Left colon (tissue), 2 donors: ENCODE measurements at regions of chr4 and their contacts with region 1.

Region 1: DNA sequence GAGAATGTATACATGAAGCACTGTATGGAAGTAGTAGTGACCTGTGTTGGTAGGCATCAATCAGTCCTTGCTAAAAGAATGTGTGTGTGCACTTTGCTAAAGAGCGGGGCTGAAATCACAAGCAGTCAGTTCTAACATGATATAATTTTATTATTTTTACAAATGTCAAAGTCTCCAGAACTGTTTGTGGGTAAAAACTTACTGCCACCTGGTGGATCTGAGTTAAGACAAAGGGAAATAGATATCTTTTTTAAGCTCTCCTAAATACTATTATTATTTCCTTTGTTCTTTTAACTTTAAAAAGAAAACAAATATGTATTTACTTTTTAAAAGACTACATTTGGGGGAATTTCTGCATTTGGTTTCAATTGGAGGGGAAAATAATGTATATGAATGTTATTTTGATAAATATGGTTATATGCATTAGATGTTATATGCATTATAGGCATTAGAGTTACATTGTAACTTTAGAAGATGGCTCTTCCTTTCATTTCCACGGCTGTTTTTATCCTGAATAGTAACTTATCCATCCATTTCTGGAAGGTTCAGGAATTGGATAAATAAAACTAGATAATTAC is 7.8 kb upstream of the CLOCK start:
- DNase-seq: no peak
- ATAC-seq: no peak

Region 2: GRCh38 chr4:55395529-55396307 is 158.8 kb before region 1 on chr4 and contains the start of gene TMEM165:
- intact Hi-C with region 1: loop called in 1 of 2 experiments (anchors 5 kb)
- DNase-seq: peak; percentile 94 to 95
- ATAC-seq: peak; percentile 96
- total RNA-seq, gene TMEM165: 65.8 to 71.9 TPM

Region 3: GRCh38 chr4:55853484-55854046 is 299.0 kb after region 1 on chr4 and contains the start of gene EXOC1:
- intact Hi-C with region 1: no loop called
- DNase-seq: peak; percentile 99 to 100
- ATAC-seq: peak; percentile 97
- total RNA-seq, gene EXOC1: 37.1 to 43.8 TPM

Region 4: GRCh38 chr4:55866973-55867574 is 312.5 kb after region 1 on chr4:
- intact Hi-C with region 1: loop called in 1 of 2 experiments (anchors 10 kb)
- DNase-seq: no peak
- ATAC-seq: peak; percentile 82